Mammary epithelial cell (primary cell): ENCODE measurements at regions of chr6 and their contacts with region 1.

Region 1: GRCh38 chr6:7541175-7542064 is at the start of gene DSP:
- DNase-seq: peak; percentile 93
- H3K4me3 ChIP-seq: peak within 1 kb of the TSS; percentile 92 to 99 (median 98)
- H3K27ac ChIP-seq: peak within 1 kb of the TSS; percentile 92
- H3K4me1 ChIP-seq: peaks cover 24% of the 10 kb centered on the region
- H3K27me3 ChIP-seq: no peaks in the 10 kb centered on the region
- CTCF ChIP-seq: no peak
- total RNA-seq, gene DSP: 397 to 468 TPM

Region 2: GRCh38 chr6:7446619-7447325 is 94.6 kb before region 1 on chr6:
- CTCF ChIA-PET with region 1: no interaction called
- dilution Hi-C with region 1: no loop called
- in situ Hi-C with region 1: no loop called
- intact Hi-C with region 1: loop called (anchors 1 kb)
- DNase-seq: peak; percentile 94
- H3K4me3 ChIP-seq: peak overlapping the region in 2 of 3 experiments; percentile 19 to 27
- H3K27ac ChIP-seq: peak overlapping the region; percentile 87
- H3K4me1 ChIP-seq: peaks cover 18% of the 10 kb centered on the region
- H3K27me3 ChIP-seq: no peaks in the 10 kb centered on the region
- CTCF ChIP-seq: peak in 1 of 2 donors; percentile 22

Region 3: DNA sequence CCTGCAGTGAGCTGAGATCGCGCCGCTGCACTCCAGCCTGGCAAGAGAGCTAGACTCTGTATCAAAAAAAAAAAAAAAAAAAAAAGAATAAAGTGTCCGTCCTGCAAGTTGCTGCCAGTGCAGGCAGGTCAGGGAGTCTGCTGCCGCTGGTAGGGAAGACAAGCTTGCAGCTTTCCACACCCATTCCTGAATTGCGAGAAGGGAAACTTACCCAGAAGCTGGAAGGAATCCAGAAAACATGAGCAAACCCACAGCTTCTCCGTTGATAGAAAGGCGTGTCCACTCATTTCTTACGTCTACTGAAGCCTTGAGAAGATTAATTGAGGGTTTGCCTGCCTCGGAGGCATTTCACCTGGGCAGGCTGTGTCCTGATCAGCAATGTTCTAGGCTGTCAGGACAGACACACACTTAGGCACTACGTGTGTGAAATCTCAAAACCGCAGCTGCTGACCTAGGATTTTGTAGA is 61.6 kb before region 1 on chr6:
- CTCF ChIA-PET with region 1: no interaction called
- dilution Hi-C with region 1: no loop called
- in situ Hi-C with region 1: no loop called
- intact Hi-C with region 1: loop called (anchors 2 kb)
- DNase-seq: peak; percentile 100
- H3K4me3 ChIP-seq: no peak overlapping the region
- H3K27ac ChIP-seq: peak overlapping the region; percentile 94
- H3K4me1 ChIP-seq: peaks cover 7% of the 10 kb centered on the region
- H3K27me3 ChIP-seq: no peaks in the 10 kb centered on the region
- CTCF ChIP-seq: no peak

Region 4: DNA sequence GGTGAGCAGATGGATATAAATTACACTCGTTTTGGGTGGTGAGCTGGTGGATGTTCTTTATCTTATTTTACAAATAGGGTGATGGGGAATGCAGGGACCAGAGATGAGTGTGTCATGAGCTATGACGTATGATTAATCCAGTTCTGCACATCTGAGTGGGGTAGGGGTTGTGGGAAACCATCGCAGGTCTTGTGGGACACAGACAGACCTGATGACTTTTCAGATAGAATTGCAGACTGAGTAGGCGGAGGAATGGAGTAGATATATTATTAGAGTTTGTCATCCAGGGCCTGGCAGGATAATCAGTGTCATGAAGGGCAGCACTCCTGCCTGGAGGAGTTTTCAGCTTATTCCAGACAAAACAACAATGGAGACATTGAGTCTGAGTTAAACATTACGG is 12.9 kb before region 1 on chr6:
- CTCF ChIA-PET with region 1: no interaction called
- dilution Hi-C with region 1: no loop called
- in situ Hi-C with region 1: no loop called
- intact Hi-C with region 1: loop called (anchors 1 kb)
- DNase-seq: peak; percentile 97
- H3K4me3 ChIP-seq: no peak overlapping the region
- H3K27ac ChIP-seq: peak overlapping the region; percentile 48
- H3K4me1 ChIP-seq: peaks cover 31% of the 10 kb centered on the region
- H3K27me3 ChIP-seq: no peaks in the 10 kb centered on the region
- CTCF ChIP-seq: no peak

Region 5: GRCh38 chr6:7561153-7561964 is 19.9 kb after region 1 on chr6:
- CTCF ChIA-PET with region 1: no interaction called
- dilution Hi-C with region 1: no loop called
- in situ Hi-C with region 1: no loop called
- intact Hi-C with region 1: loop called (anchors 1 kb)
- DNase-seq: peak; percentile 89
- H3K4me3 ChIP-seq: peak overlapping the region in 1 of 3 experiments; percentile 0
- H3K27ac ChIP-seq: peak overlapping the region; percentile 88
- H3K4me1 ChIP-seq: peaks cover 37% of the 10 kb centered on the region
- H3K27me3 ChIP-seq: no peaks in the 10 kb centered on the region
- CTCF ChIP-seq: no peak